Left cardiac atrium (tissue), 4 donors: ENCODE measurements at regions of chr18 and their contacts with region 1.

Region 1: DNA sequence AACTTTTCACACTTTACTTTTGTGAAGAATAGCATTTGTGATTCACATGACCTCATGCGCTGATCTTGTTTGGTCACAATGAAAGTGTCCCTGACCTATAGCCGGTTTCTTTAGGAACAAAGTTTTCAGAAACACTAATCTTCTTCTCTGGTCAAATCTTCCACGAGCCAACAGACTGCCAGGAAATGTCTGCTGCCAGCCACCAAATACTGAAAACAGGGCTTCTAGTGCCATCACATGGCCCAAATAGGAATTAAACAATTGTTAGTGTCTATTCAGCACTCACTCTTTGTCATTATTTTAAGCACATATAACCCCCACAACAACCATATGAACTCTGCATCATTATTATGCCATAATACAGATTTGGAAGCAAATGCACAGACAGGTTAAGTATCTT is 286.5 kb upstream of the SYT4 start:
- DNase-seq: no peak
- ATAC-seq: peak; percentile 58 to 77

Region 2: DNA sequence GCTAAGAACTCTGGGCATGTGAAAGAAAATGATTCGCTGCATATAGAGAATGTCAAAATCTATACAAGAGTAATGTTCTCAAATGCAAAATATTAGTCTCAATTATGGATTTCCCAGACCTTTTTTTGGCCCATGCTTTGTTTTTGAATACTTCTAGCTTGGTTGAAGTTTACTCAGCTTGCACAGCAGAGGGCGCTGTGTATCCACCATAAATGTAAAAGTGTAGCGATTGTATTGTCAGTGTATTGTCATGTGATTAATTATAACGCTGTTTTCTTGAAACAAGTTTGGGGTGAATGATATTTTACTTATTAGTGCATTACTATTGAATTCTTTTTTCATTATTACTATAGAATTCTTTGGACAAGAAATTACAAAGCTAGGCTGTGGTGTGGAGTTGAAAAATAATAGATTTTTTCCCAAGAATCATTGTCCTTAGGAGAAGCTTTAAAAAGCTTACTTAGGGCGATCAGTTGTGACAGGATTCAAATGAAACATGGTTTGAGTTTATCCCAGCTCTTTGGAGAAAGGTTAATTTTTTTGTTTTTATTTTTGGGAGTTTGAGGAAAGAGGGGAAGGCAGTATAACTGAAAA is 1510.5 kb before region 1 on chr18:
- intact Hi-C with region 1: loop called in 1 of 2 experiments (anchors 5 kb)
- DNase-seq: peak; percentile 32
- ATAC-seq: peak; percentile 72 to 80

Region 3: DNA sequence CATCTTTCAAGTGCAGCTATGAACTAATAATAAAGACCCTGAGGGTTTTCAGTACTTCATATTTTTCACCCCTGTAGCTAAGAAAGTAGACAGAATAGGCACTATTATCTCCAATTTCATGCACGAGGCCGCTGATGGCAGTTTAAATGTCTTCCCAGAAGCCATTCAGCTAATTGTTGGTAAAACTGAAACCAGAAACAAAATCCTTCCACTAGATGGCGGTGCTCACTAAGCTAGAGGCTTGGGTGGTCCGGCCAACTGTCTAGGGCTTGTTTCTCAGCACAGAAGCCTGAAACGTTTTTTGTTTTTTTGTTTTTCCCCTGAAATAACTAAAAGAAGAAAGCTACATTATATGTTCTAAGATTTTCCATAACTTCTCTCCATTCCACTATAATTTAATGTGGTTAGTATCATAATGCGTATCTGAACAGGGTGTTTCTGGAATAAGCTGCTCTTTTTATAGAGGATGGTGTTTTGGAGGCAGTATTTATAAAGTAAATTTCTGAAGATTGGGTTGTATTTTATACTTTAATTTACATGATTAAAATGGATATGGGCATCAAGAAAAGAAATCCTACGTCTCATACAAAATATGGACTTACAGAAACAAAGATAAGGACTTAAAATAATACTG is 1449.4 kb before region 1 on chr18:
- intact Hi-C with region 1: loop called in 1 of 2 experiments (anchors 5 kb)
- DNase-seq: peak; percentile 44
- ATAC-seq: peak; percentile 87 to 92

Region 4: GRCh38 chr18:42586601-42587000 is 977.2 kb before region 1 on chr18:
- intact Hi-C with region 1: loop called in 1 of 2 experiments (anchors 10 kb)
- DNase-seq: no peak
- ATAC-seq: no peak

Region 5: GRCh38 chr18:43277164-43277600 is 286.6 kb before region 1 on chr18 and contains the start of gene SYT4:
- intact Hi-C with region 1: loop called in 1 of 2 experiments (anchors 5 kb)
- DNase-seq: peak; percentile 56
- ATAC-seq: peak; percentile 86 to 96
- total RNA-seq, gene SYT4: 2.4 to 3.8 TPM

Region 6: DNA sequence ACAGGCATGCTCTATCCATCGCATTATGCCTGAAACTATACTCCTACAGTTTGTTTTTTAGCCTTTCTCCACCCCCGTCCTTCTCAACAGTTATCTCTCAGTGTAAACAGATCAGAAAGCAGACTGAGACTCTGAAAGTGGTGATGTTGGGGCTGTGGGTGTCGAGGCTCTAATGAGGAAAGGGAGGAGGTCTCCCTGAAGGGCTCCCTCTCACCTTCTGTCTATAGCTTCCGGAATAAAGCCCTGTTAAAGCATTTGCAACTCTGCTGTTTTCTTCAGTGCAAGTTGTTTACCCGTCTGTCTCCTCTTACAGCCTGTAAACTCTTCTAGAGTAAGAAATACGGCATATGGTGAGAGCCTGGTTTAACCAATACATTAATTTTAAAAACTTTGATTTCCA is 149.8 kb before region 1 on chr18:
- intact Hi-C with region 1: loop called in 1 of 2 experiments (anchors 10 kb)
- DNase-seq: no peak
- ATAC-seq: no peak

Region 7: GRCh38 chr18:43692099-43692690 is 128.4 kb after region 1 on chr18:
- intact Hi-C with region 1: no loop called
- DNase-seq: no peak
- ATAC-seq: no peak

Region 8: GRCh38 chr18:43893001-43893637 is 329.3 kb after region 1 on chr18:
- intact Hi-C with region 1: no loop called
- DNase-seq: no peak
- ATAC-seq: peak; percentile 15 to 93